Heart right ventricle (tissue), 16 donors: ENCODE measurements at regions of chr4 and their contacts with region 1.

Region 1: GRCh38 chr4:138199568-138200235 is 42.4 kb downstream of the SLC7A11 start:
- DNase-seq: no peak
- ATAC-seq: peak in 1 of 8 donors; percentile 50
- H3K4me3 ChIP-seq: no peak overlapping the region
- H3K27ac ChIP-seq: peak overlapping the region in 2 of 10 donors; percentile 1 to 7
- H3K4me1 ChIP-seq: peaks cover 0 to 7% (median 0%) of the 10 kb centered on the region in 9 donors
- H3K27me3 ChIP-seq: no peaks in the 10 kb centered on the region
- CTCF ChIP-seq: no peak

Region 2: DNA sequence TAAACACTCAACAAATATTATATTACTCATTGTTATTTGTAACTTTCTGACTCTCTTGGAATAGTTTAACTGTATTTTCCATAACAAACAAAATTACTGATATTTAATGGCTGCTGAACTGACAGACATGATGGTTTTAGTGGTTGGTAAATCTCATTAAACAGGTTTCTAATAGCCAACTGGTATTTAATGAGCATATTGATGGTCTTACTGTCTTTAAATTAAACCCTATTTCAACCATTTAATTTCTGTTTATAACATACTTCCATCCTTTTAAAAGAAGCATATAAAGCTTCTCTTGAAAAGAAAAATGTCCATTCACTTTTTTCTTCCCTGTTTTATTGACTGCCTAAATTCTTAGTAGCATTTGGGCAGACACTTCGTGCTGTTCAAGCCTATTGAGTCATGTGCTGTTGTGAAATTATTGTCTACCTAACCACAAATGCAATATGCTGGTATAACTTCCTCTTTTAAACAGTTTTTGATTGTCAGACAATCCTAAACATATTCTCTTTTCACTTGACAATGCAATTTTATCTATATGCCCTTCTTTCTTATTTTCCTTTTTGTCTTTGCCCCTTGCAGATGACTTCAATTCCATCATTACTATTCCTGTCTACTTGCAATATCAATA is 206.3 kb after region 1 on chr4:
- intact Hi-C with region 1: loop called in 1 of 10 experiments (anchors 5 kb)
- DNase-seq: no peak
- ATAC-seq: peak in 3 of 8 donors; percentile 35 to 42 (median 35)
- H3K4me3 ChIP-seq: no peak overlapping the region
- H3K27ac ChIP-seq: peak overlapping the region in 1 of 10 donors; percentile 39
- H3K4me1 ChIP-seq: peaks cover 0 to 30% (median 4%) of the 10 kb centered on the region in 9 donors
- H3K27me3 ChIP-seq: no peaks in the 10 kb centered on the region
- CTCF ChIP-seq: no peak

Region 3: GRCh38 chr4:138555584-138555983 is 355.9 kb after region 1 on chr4:
- intact Hi-C with region 1: no loop called
- DNase-seq: no peak
- ATAC-seq: no peak
- H3K4me3 ChIP-seq: no peak overlapping the region
- H3K27ac ChIP-seq: no peak overlapping the region
- H3K4me1 ChIP-seq: no peaks in the 10 kb centered on the region
- H3K27me3 ChIP-seq: no peaks in the 10 kb centered on the region
- CTCF ChIP-seq: no peak